IMR-90 (cell line): ENCODE measurements at regions of chr1 and their contacts with region 1.

Region 1: GRCh38 chr1:215321802-215322201 is 239.3 kb downstream of the KCNK2 start:
- DNase-seq: no peak
- ATAC-seq: no peak; the same call in 1 of the 2 replicates
- H3K4me3 ChIP-seq: no peak overlapping the region
- H3K27ac ChIP-seq: no peak overlapping the region
- H3K4me1 ChIP-seq: peaks cover 1% of the 10 kb centered on the region; the same call in 1 of the 2 replicates
- H3K27me3 ChIP-seq: no peaks in the 10 kb centered on the region; the same call in 1 of the 2 replicates
- CTCF ChIP-seq: no peak
- POLR2A ChIP-seq: no peak
- RAD21 ChIP-seq: no peak

Region 2: DNA sequence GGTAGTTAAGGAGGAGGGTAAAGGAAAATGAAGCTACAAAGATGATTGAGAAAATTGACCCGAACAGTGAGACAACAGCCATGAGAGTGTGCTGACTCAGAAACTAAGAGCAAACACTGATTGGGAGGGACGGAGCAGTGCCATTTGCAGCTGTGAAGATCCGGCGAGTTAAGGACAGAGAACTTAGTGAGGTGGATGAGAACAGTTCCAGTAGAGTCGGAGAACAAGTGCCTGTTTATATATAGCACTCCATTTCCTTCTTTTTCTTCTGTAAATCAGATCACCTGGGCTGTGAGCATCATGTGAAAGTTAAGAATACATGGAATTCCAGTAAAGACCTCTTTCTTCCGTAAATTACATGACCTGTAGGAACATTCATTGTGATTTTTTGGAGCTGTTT is 93.6 kb before region 1 on chr1:
- CTCF ChIA-PET with region 1: no interaction called
- POLR2A ChIA-PET with region 1: no interaction called
- dilution Hi-C with region 1: no loop called
- in situ Hi-C with region 1: no loop called
- intact Hi-C with region 1: no loop called
- DNase-seq: no peak
- ATAC-seq: no peak
- H3K4me3 ChIP-seq: no peak overlapping the region
- H3K27ac ChIP-seq: no peak overlapping the region
- H3K4me1 ChIP-seq: no peaks in the 10 kb centered on the region
- H3K27me3 ChIP-seq: no peaks in the 10 kb centered on the region
- CTCF ChIP-seq: no peak
- POLR2A ChIP-seq: no peak
- RAD21 ChIP-seq: no peak

Region 3: DNA sequence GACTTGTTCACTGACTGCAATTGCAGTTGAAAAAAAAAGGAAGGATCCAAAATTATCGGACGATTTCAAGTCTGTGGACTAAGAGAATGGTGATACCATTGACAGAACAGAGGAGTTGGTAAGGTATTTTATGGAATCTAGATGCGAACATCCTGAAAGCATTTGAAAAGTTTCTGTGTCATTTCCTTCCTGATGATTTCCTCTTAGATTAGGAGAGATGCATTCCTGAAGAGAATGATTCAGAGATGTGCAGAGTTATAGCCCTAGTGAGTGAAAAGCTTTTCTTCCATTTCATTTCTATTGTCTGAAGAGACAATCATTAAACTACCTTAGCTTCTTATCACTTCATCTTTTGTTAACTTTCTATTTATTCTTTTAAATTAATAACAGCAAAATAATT is 39.2 kb before region 1 on chr1:
- CTCF ChIA-PET with region 1: no interaction called
- POLR2A ChIA-PET with region 1: no interaction called
- dilution Hi-C with region 1: no loop called
- in situ Hi-C with region 1: no loop called
- intact Hi-C with region 1: loop called (anchors 1 kb)
- DNase-seq: peak; percentile 35
- ATAC-seq: 0 out of 2 replicates have a peak, but pooled peaks have one; percentile 22
- H3K4me3 ChIP-seq: no peak overlapping the region
- H3K27ac ChIP-seq: no peak overlapping the region
- H3K4me1 ChIP-seq: peaks cover 5% of the 10 kb centered on the region; the same call in 1 of the 2 replicates
- H3K27me3 ChIP-seq: no peaks in the 10 kb centered on the region
- CTCF ChIP-seq: no peak
- POLR2A ChIP-seq: no peak
- RAD21 ChIP-seq: no peak